ENCODE measurements at regions of chr1 and their contacts with region 1.

Region 1: GRCh38 chr1:150876119-150876454 is 312 bp downstream of the ARNT start:
- DNase-seq: peak; percentile 58
- H3K4me3 Mint-ChIP-seq: peak overlapping the region; percentile 83
- H3K27ac Mint-ChIP-seq: peak overlapping the region; percentile 83
- H3K4me1 Mint-ChIP-seq: peaks cover 18% of the 10 kb centered on the region
- H3K27me3 Mint-ChIP-seq: no peaks in the 10 kb centered on the region

Region 2: GRCh38 chr1:150578965-150579798 is 296.9 kb before region 1 on chr1 and contains the start of gene MCL1:
- CTCF ChIA-PET with region 1: no interaction called
- intact Hi-C with region 1: loop called (anchors 1 kb)
- DNase-seq: peak; percentile 95
- H3K4me3 Mint-ChIP-seq: peak within 1 kb of the TSS; percentile 90
- H3K27ac Mint-ChIP-seq: peak within 1 kb of the TSS; percentile 99
- H3K4me1 Mint-ChIP-seq: peaks cover 19% of the 10 kb centered on the region
- H3K27me3 Mint-ChIP-seq: no peaks in the 10 kb centered on the region
- total RNA-seq, gene MCL1: 228 to 235 TPM

Region 3: GRCh38 chr1:150765296-150765976 is 110.7 kb before region 1 on chr1 and contains the start of gene CTSS:
- CTCF ChIA-PET with region 1: no interaction called
- intact Hi-C with region 1: loop called (anchors 10 kb)
- DNase-seq: no peak
- H3K4me3 Mint-ChIP-seq: peak within 1 kb of the TSS; percentile 90
- H3K27ac Mint-ChIP-seq: peak within 1 kb of the TSS; percentile 94
- H3K4me1 Mint-ChIP-seq: peaks cover 48% of the 10 kb centered on the region
- H3K27me3 Mint-ChIP-seq: no peaks in the 10 kb centered on the region
- total RNA-seq, gene CTSS: 37.0 to 37.7 TPM

Region 4: GRCh38 chr1:150841626-150842025 is 34.5 kb before region 1 on chr1:
- CTCF ChIA-PET with region 1: no interaction called
- intact Hi-C with region 1: loop called (anchors 2 kb)
- DNase-seq: no peak
- H3K4me3 Mint-ChIP-seq: no peak overlapping the region
- H3K27ac Mint-ChIP-seq: no peak overlapping the region
- H3K4me1 Mint-ChIP-seq: peaks cover 35% of the 10 kb centered on the region
- H3K27me3 Mint-ChIP-seq: no peaks in the 10 kb centered on the region

Region 5: GRCh38 chr1:150890033-150890416 is 13.9 kb after region 1 on chr1:
- CTCF ChIA-PET with region 1: interaction called, 4 read pairs
- intact Hi-C with region 1: loop called (anchors 1 kb)
- DNase-seq: no peak
- H3K4me3 Mint-ChIP-seq: no peak overlapping the region
- H3K27ac Mint-ChIP-seq: peak overlapping the region; percentile 12
- H3K4me1 Mint-ChIP-seq: peaks cover 25% of the 10 kb centered on the region
- H3K27me3 Mint-ChIP-seq: no peaks in the 10 kb centered on the region

Region 6: DNA sequence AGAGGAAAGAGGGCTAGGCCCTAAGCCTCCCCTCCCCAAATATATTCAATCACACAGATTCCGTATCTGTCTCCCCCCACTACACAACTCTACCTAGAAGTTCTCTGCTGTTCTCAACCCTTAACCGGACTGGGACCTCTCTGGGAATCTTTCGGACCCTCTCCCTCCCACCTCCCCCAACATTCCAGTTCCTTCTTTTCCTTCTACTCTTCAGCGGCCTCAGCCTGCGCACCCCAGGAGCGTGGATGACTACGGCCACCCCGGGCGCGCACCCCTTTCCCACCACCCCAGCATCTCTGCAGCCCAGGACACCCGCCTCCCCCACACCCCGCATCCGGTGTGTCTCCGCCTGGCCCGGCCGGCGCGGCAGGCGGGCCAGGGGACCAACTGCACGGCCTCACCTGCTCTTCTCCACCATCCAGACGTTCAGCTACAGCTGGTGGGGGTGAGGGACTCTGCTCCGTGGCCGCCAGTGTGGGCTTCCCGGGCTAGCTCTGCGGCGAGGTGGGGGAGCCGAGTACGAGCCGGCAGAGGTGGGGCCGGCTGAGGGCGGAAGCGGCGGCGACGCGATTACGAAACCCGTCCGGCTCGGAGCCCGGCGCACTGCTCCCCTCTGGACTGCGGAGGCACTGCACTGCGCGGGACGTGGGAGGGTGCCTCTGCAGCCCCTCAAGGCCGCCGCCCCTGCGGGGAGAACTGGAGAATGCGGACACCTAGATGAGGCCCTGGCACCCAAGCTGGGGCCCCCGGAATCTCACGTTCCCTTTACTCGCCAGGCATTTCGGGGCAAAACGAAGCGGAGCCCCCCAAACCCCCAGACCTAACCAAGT is 183.2 kb after region 1 on chr1 and contains the start of gene CDC42SE1:
- CTCF ChIA-PET with region 1: no interaction called
- intact Hi-C with region 1: loop called (anchors 5 kb)
- DNase-seq: peak; percentile 86
- H3K4me3 Mint-ChIP-seq: peak within 1 kb of the TSS; percentile 86
- H3K27ac Mint-ChIP-seq: peak within 1 kb of the TSS; percentile 98
- H3K4me1 Mint-ChIP-seq: peaks cover 53% of the 10 kb centered on the region
- H3K27me3 Mint-ChIP-seq: no peaks in the 10 kb centered on the region
- total RNA-seq, gene CDC42SE1: 98.1 to 99.0 TPM